Activated naive CD4-positive, alpha-beta T cell treated with anti-CD3 and anti-CD28 coated beads for 36 hours (primary cell): ENCODE measurements at regions of chr14 and their contacts with region 1.

Region 1: DNA sequence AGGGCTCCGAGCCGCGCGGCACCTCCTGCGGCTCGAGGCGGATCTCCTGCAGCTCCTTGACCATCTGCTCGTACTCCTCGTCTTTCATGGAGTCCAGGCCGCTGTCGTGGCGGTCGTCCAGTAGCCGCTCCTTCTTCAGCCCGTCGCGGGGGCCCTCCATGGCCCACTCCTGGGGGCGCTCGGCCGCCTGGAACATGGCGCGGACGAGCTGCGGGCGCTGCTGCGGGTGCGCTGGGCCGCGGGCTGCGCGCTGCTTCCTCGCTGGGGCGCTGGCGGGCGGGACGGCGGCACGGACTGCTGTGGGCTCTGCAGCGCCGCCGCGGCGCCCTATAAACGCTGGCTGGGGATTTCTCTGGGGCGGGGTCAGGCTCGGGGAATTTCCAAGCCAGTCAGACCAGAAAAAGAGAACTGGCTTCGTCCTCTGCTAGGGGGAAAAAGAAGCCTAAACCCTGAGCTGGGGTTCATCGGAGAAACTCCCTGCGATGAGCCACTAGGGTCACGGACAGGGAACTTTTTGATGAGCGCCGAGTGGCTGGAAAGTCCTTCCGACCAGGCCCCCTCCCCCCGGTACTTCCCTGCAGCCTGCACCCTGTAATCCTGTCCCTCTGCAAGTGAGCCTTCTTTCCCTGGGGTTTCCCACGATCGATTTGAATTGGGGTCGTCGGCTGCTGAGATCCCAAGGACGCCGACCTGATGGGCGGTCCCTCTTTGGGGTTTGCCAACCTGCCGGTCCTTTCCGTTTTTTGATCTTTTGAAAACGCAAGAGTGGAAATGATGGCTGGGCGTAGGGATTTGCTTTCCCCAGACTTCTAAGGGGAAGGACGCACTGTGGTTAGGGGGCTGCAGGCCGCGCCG is at the start of gene NFKBIA:
- DNase-seq: peak; percentile 96
- H3K4me3 Mint-ChIP-seq: peak within 1 kb of the TSS; percentile 98
- H3K27ac Mint-ChIP-seq: peak within 1 kb of the TSS; percentile 99
- H3K4me1 Mint-ChIP-seq: peaks cover 31% of the 10 kb centered on the region
- H3K27me3 Mint-ChIP-seq: no peaks in the 10 kb centered on the region
- total RNA-seq, gene NFKBIA: 289 to 293 TPM

Region 2: GRCh38 chr14:34629657-34630529 is 774.8 kb before region 1 on chr14 and contains the start of gene SNX6:
- CTCF ChIA-PET with region 1: no interaction called
- intact Hi-C with region 1: loop called (anchors 5 kb)
- DNase-seq: peak; percentile 85
- H3K4me3 Mint-ChIP-seq: peak within 1 kb of the TSS; percentile 93
- H3K27ac Mint-ChIP-seq: peak within 1 kb of the TSS; percentile 89
- H3K4me1 Mint-ChIP-seq: peaks cover 20% of the 10 kb centered on the region
- H3K27me3 Mint-ChIP-seq: no peaks in the 10 kb centered on the region
- total RNA-seq, gene SNX6: 73.9 to 74.3 TPM

Region 3: DNA sequence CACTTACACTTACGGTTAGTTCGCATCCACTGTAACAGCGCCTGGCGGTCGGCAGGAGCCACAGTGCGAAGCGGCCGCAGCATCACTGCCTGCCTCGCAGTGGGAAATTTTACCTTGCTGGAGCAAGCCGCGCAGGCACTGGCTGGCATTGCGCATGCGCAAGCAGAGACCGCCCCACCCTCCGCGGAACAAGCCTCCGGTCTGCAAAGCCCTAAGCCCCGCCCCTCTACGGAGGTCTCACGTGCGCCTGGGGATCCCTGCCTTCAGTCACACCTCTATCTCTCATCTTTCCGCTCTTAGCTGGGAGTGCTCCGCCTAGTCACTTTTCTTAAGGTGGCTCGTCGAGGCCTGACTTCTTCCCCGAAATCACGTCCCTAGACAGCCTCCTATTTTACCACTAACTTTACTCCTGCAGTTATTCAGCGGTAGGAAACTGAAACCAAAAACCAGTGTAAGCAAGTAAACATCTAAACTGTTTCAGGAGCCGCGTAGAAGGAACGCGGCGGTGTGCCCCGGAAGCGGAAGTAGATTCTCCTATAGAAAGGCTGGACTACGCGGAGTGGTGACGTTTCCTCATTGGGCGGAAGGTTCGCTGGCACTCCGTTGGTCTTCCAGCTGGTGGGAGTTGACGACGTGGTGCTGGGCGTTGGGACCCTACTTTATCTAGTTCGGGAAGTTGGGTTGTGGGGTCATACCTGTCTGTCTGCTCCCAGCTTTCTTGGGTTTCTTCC is 422.1 kb before region 1 on chr14 and contains the start of gene SRP54:
- CTCF ChIA-PET with region 1: no interaction called
- intact Hi-C with region 1: loop called (anchors 1 kb)
- DNase-seq: peak; percentile 100
- H3K4me3 Mint-ChIP-seq: no peak within 1 kb of the TSS
- H3K27ac Mint-ChIP-seq: no peak within 1 kb of the TSS
- H3K4me1 Mint-ChIP-seq: peaks cover 38% of the 10 kb centered on the region
- H3K27me3 Mint-ChIP-seq: no peaks in the 10 kb centered on the region
- total RNA-seq, gene SRP54: 66.5 to 72.6 TPM

Region 4: GRCh38 chr14:35159742-35160409 is 244.8 kb before region 1 on chr14:
- CTCF ChIA-PET with region 1: no interaction called
- intact Hi-C with region 1: loop called (anchors 1 kb)
- DNase-seq: no peak
- H3K4me3 Mint-ChIP-seq: no peak overlapping the region
- H3K27ac Mint-ChIP-seq: peak overlapping the region; percentile 32
- H3K4me1 Mint-ChIP-seq: peaks cover 52% of the 10 kb centered on the region
- H3K27me3 Mint-ChIP-seq: no peaks in the 10 kb centered on the region

Region 5: GRCh38 chr14:35261774-35262173 is 142.9 kb before region 1 on chr14:
- CTCF ChIA-PET with region 1: interaction called, 7 read pairs
- intact Hi-C with region 1: loop called (anchors 1 kb)
- DNase-seq: no peak
- H3K4me3 Mint-ChIP-seq: no peak overlapping the region
- H3K27ac Mint-ChIP-seq: no peak overlapping the region
- H3K4me1 Mint-ChIP-seq: peaks cover 4% of the 10 kb centered on the region
- H3K27me3 Mint-ChIP-seq: no peaks in the 10 kb centered on the region

Region 6: GRCh38 chr14:35331605-35332516 is 72.8 kb before region 1 on chr14:
- CTCF ChIA-PET with region 1: interaction called, 11 read pairs
- intact Hi-C with region 1: loop called (anchors 1 kb)
- DNase-seq: no peak
- H3K4me3 Mint-ChIP-seq: no peak overlapping the region
- H3K27ac Mint-ChIP-seq: peak overlapping the region; percentile 94
- H3K4me1 Mint-ChIP-seq: peaks cover 32% of the 10 kb centered on the region
- H3K27me3 Mint-ChIP-seq: no peaks in the 10 kb centered on the region

Region 7: DNA sequence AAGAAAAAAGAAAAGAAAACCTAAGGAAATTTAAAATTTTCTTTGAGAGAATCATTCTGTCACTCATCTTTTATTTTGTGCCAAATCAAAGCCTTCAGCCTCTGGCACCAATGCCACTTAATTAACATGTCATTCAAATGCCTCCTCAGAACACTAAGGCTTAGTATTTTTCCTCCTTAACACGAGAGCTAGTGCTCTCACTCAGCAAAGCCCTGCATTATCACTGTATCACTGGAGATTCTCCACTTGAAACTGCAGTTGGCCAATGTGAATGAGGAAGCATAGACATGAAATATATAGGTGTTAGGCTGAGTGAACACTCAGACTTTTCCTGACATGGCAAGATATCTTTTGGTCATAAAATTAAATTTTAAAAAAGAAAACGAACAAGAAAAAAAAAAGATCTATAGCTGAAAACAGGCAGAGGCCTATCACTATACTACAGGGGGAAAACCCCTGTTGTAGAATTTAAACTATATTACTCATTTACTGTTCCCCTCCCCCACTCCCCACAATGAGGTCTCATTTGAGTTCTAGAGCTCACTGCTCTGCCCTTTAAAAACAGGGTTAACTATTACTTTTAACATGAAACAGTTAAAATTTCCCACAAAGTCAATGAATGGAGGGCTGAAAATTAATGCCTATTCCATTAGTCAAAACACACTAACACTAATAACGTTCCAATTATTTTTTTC is 910.6 kb after region 1 on chr14:
- CTCF ChIA-PET with region 1: no interaction called
- intact Hi-C with region 1: loop called (anchors 5 kb)
- DNase-seq: peak; percentile 80
- H3K4me3 Mint-ChIP-seq: peak overlapping the region; percentile 43
- H3K27ac Mint-ChIP-seq: peak overlapping the region; percentile 89
- H3K4me1 Mint-ChIP-seq: peaks cover 40% of the 10 kb centered on the region
- H3K27me3 Mint-ChIP-seq: no peaks in the 10 kb centered on the region